Activated CD4-positive, alpha-beta memory T cell treated with anti-CD3 and anti-CD28 coated beads for 36 hours (primary cell): ENCODE measurements at regions of chr20 and their contacts with region 1.

Region 1: DNA sequence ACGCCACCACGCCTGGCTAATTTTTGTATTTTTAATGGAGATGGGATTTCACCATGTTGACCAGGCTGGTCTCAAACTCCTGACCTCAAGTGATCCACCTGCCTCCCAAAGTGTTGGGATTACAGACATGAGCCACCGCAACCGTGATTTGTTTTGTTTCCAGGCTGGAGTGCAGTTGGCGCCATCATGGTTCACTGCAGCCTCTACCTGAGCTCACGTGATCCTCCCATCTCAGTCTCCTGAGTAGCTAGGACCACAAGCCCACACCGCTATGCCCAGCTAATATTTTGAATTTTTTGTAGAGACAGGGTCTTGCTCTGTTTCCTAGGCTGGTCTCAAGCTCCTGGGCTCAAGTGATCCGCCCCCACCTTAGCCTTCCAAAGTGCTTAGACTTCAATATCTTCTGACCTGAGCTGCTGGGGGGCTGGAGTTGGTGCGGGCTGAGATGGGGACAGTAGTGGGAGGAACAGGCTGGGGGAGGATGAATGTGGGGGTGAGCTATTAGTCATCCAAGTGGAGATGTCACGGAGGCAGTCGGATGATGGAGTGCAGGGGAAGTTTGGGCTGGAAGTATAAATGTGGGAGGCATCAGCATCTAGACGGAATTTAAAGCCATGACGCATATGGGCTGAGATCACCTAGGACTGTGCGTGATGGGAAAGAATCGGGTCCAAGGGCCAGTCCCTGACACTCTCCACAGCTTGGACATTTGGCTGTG is 23.1 kb upstream of the ZMYND8 start:
- DNase-seq: no peak
- H3K4me3 Mint-ChIP-seq: no peak overlapping the region
- H3K27ac Mint-ChIP-seq: no peak overlapping the region
- H3K4me1 Mint-ChIP-seq: peaks cover 18% of the 10 kb centered on the region
- H3K27me3 Mint-ChIP-seq: no peaks in the 10 kb centered on the region

Region 2: GRCh38 chr20:47173596-47174216 is 205.9 kb before region 1 on chr20:
- CTCF ChIA-PET with region 1: no interaction called
- POLR2A ChIA-PET with region 1: no interaction called
- intact Hi-C with region 1: no loop called
- DNase-seq: no peak
- H3K4me3 Mint-ChIP-seq: no peak overlapping the region
- H3K27ac Mint-ChIP-seq: no peak overlapping the region
- H3K4me1 Mint-ChIP-seq: no peaks in the 10 kb centered on the region
- H3K27me3 Mint-ChIP-seq: peaks cover 17% of the 10 kb centered on the region

Region 3: DNA sequence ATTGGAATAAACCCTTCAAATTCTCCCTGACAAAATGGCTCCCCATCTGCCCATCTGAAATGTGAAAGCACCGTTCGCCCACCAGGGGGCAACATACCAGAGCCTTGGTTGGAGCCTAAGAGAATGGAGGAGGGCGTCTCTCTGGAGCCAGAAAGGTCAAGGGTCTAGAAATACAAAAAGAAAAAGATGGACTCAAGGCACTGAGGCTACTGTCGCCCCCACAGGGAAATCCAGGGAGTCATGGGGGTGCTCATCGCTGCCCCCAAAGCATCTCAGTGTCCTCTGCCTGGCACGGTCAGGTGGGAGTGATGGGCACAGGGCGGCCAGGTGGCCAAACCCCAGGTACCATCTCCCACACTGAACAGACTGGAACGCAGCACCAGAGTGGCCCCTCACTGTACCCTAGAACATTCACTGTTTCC is 159.4 kb before region 1 on chr20:
- CTCF ChIA-PET with region 1: interaction called, 122 read pairs
- POLR2A ChIA-PET with region 1: no interaction called
- intact Hi-C with region 1: no loop called
- DNase-seq: peak; percentile 65
- H3K4me3 Mint-ChIP-seq: no peak overlapping the region
- H3K27ac Mint-ChIP-seq: no peak overlapping the region
- H3K4me1 Mint-ChIP-seq: no peaks in the 10 kb centered on the region
- H3K27me3 Mint-ChIP-seq: no peaks in the 10 kb centered on the region

Region 4: DNA sequence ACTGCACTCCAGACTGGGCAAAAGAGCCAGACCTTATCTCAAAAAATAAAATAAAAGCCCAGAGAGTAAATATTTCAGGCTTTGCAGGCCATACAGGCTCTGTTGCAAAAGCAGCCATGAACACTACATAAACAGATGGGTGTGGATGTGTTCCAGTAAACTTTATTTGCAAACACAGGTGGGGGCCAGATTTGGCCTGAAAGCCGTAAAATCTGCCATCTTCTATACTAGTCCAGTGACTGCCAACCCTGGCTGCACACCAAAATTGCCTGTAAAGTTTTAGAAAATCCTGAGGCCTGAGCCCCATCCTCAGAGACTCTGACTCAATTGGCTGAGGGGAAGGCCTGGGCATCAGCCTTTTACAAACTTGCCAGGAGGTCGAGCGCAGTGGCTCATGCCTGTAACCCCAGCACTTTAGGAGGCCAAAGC is 126.7 kb before region 1 on chr20:
- CTCF ChIA-PET with region 1: interaction called, 11 read pairs
- POLR2A ChIA-PET with region 1: no interaction called
- intact Hi-C with region 1: no loop called
- DNase-seq: no peak
- H3K4me3 Mint-ChIP-seq: no peak overlapping the region
- H3K27ac Mint-ChIP-seq: no peak overlapping the region
- H3K4me1 Mint-ChIP-seq: peaks cover 2% of the 10 kb centered on the region
- H3K27me3 Mint-ChIP-seq: no peaks in the 10 kb centered on the region

Region 5: GRCh38 chr20:47348539-47349142 is 31.0 kb before region 1 on chr20:
- CTCF ChIA-PET with region 1: interaction called, 67 read pairs
- POLR2A ChIA-PET with region 1: no interaction called
- intact Hi-C with region 1: no loop called
- DNase-seq: no peak
- H3K4me3 Mint-ChIP-seq: no peak overlapping the region
- H3K27ac Mint-ChIP-seq: no peak overlapping the region
- H3K4me1 Mint-ChIP-seq: peaks cover 28% of the 10 kb centered on the region
- H3K27me3 Mint-ChIP-seq: no peaks in the 10 kb centered on the region

Region 6: GRCh38 chr20:47411161-47411560 is 31.6 kb after region 1 on chr20:
- CTCF ChIA-PET with region 1: interaction called, 28 read pairs
- POLR2A ChIA-PET with region 1: no interaction called
- intact Hi-C with region 1: no loop called
- DNase-seq: no peak
- H3K4me3 Mint-ChIP-seq: peak overlapping the region; percentile 13
- H3K27ac Mint-ChIP-seq: no peak overlapping the region
- H3K4me1 Mint-ChIP-seq: peaks cover 31% of the 10 kb centered on the region
- H3K27me3 Mint-ChIP-seq: no peaks in the 10 kb centered on the region

Region 7: GRCh38 chr20:47501483-47502270 is 122.1 kb after region 1 on chr20 and contains the start of gene NCOA3:
- CTCF ChIA-PET with region 1: interaction called, 30 read pairs
- POLR2A ChIA-PET with region 1: interaction called, 5 read pairs
- intact Hi-C with region 1: no loop called
- DNase-seq: peak; percentile 96
- H3K4me3 Mint-ChIP-seq: peak within 1 kb of the TSS; percentile 92
- H3K27ac Mint-ChIP-seq: peak within 1 kb of the TSS; percentile 89
- H3K4me1 Mint-ChIP-seq: peaks cover 54% of the 10 kb centered on the region
- H3K27me3 Mint-ChIP-seq: no peaks in the 10 kb centered on the region
- total RNA-seq, gene NCOA3: 72.0 to 81.8 TPM